Body of pancreas (tissue), 4 donors: ENCODE measurements at regions of chr13 and their contacts with region 1.

Region 1: GRCh38 chr13:99916366-99917103 is 55.0 kb downstream of the ZIC5 start:
- DNase-seq: peak; percentile 19 to 55 (median 35)
- ATAC-seq: peak; percentile 96
- H3K4me3 ChIP-seq: no peak overlapping the region
- H3K27ac ChIP-seq: no peak overlapping the region
- H3K4me1 ChIP-seq: no peaks in the 10 kb centered on the region
- H3K27me3 ChIP-seq: no peaks in the 10 kb centered on the region
- CTCF ChIP-seq: peak; percentile 84 to 100 (median 98)
- POLR2A ChIP-seq: no peak

Region 2: DNA sequence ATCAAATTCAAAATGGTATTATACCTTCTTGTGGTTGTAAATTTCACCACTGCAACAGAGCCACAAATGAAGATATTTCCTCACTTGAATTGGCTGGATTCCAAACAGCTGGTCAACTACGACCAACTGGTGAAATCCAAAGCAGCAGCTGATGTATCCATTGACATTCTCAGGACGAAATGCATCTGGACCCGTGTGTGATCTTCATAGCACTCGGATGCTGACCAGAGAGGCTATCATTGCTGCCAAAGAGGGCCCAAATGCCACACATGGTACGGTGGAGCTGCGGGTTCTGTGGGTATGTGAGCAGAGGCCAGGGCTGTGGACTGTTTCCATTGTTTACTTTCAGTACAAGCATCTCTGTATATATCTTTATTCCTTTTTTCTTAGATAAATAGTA is 146.8 kb after region 1 on chr13:
- intact Hi-C with region 1: no loop called
- DNase-seq: no peak
- ATAC-seq: no peak
- H3K4me3 ChIP-seq: no peak overlapping the region
- H3K27ac ChIP-seq: no peak overlapping the region
- H3K4me1 ChIP-seq: no peaks in the 10 kb centered on the region
- H3K27me3 ChIP-seq: no peaks in the 10 kb centered on the region
- CTCF ChIP-seq: no peak
- POLR2A ChIP-seq: no peak

Region 3: GRCh38 chr13:100514788-100515409 is 598.4 kb after region 1 on chr13:
- intact Hi-C with region 1: loop called (anchors 10 kb)
- DNase-seq: peak; percentile 82 to 88 (median 82)
- ATAC-seq: peak; percentile 78
- H3K4me3 ChIP-seq: no peak overlapping the region
- H3K27ac ChIP-seq: no peak overlapping the region
- H3K4me1 ChIP-seq: peaks cover 31% of the 10 kb centered on the region
- H3K27me3 ChIP-seq: no peaks in the 10 kb centered on the region
- CTCF ChIP-seq: peak; percentile 74 to 88 (median 85)
- POLR2A ChIP-seq: no peak